Activated T-helper 1 cell treated with anti-CD3 and anti-CD28 coated beads, Interleukin-12 subunit alpha, Interleukin-12 subunit beta, Interleukin-2, Interleukin-4 antibody, amounts not matched to agents 30 ng/mL and 10 ng/mL and 1 ng/mL, durations not matched to agents 14 hours and 24 hours and 36 hours (primary cell): ENCODE measurements at regions of chr3 and their contacts with region 1.

Region 1: GRCh38 chr3:13452490-13453335 is 27.4 kb upstream of the HDAC11 start:
- DNase-seq: peak; percentile 16
- H3K4me3 Mint-ChIP-seq: peak overlapping the region; percentile 91
- H3K27ac Mint-ChIP-seq: peak overlapping the region; percentile 3
- H3K4me1 Mint-ChIP-seq: peaks cover 17% of the 10 kb centered on the region
- H3K27me3 Mint-ChIP-seq: no peaks in the 10 kb centered on the region

Region 2: GRCh38 chr3:12875857-12876836 is 576.6 kb before region 1 on chr3:
- intact Hi-C with region 1: no loop called
- DNase-seq: no peak
- H3K4me3 Mint-ChIP-seq: no peak overlapping the region
- H3K27ac Mint-ChIP-seq: no peak overlapping the region
- H3K4me1 Mint-ChIP-seq: peaks cover under 1% of the 10 kb centered on the region
- H3K27me3 Mint-ChIP-seq: peaks cover 25% of the 10 kb centered on the region

Region 3: GRCh38 chr3:13091898-13092611 is 360.7 kb before region 1 on chr3:
- intact Hi-C with region 1: loop called (anchors 1 kb)
- DNase-seq: peak; percentile 71
- H3K4me3 Mint-ChIP-seq: no peak overlapping the region
- H3K27ac Mint-ChIP-seq: no peak overlapping the region
- H3K4me1 Mint-ChIP-seq: peaks cover 3% of the 10 kb centered on the region
- H3K27me3 Mint-ChIP-seq: peaks cover 5% of the 10 kb centered on the region

Region 4: GRCh38 chr3:13262493-13263211 is 190.1 kb before region 1 on chr3:
- intact Hi-C with region 1: no loop called
- DNase-seq: no peak
- H3K4me3 Mint-ChIP-seq: no peak overlapping the region
- H3K27ac Mint-ChIP-seq: no peak overlapping the region
- H3K4me1 Mint-ChIP-seq: peaks cover 6% of the 10 kb centered on the region
- H3K27me3 Mint-ChIP-seq: peaks cover 4% of the 10 kb centered on the region

Region 5: DNA sequence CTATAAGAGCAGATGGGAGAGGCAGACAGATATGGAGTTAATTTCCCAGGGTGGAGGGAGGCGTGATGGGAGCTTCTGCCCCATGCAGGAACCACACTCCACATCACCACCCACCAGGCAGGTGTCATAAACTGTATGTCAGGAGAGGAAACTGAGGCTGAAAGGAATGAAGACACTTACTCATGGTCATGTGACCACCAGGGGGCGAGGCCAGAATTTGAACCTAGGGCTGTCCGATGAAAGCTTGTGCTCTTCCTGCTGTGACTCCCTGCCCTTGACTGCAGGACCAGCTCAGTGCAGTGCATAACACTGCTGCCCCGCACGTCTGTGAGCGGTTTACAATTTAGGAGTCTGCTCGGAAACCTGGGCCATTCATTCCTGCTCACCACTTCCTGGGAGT is 61.4 kb before region 1 on chr3:
- intact Hi-C with region 1: loop called (anchors 1 kb)
- DNase-seq: no peak
- H3K4me3 Mint-ChIP-seq: no peak overlapping the region
- H3K27ac Mint-ChIP-seq: peak overlapping the region; percentile 48
- H3K4me1 Mint-ChIP-seq: peaks cover 14% of the 10 kb centered on the region
- H3K27me3 Mint-ChIP-seq: no peaks in the 10 kb centered on the region

Region 6: DNA sequence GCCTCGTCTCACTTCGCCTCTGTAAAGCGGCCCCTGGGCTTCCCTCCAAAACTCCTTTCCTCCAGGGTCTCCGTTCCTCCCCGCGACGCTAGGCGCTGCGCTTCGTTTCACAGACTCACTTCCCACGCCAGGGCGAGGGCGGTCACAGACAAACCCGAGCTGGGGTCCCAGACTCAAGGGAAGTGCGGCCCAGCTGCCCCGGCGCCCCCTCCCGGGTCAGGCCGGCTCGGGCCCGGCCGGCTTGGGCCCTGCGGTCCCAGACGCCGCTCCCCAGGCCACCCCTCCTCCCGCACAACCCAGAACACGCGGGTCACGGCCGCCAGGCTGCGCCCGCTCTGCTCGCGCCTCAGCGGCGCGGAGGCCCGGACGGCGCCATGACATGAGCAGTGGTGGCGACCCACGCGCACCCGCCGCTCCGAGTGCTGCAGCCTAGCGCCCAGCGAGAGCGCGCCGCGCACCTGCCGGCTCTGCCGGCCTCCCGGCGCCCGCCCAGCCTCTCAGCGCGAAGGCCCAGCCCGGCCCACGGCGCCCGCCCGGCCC is 33.1 kb before region 1 on chr3:
- intact Hi-C with region 1: loop called (anchors 1 kb)
- DNase-seq: peak; percentile 56
- H3K4me3 Mint-ChIP-seq: peak overlapping the region; percentile 88
- H3K27ac Mint-ChIP-seq: peak overlapping the region; percentile 92
- H3K4me1 Mint-ChIP-seq: peaks cover 71% of the 10 kb centered on the region
- H3K27me3 Mint-ChIP-seq: no peaks in the 10 kb centered on the region